Left ventricle myocardium inferior (tissue), 1 donor: ENCODE measurements at regions of chr9 and their contacts with region 1.

Region 1: DNA sequence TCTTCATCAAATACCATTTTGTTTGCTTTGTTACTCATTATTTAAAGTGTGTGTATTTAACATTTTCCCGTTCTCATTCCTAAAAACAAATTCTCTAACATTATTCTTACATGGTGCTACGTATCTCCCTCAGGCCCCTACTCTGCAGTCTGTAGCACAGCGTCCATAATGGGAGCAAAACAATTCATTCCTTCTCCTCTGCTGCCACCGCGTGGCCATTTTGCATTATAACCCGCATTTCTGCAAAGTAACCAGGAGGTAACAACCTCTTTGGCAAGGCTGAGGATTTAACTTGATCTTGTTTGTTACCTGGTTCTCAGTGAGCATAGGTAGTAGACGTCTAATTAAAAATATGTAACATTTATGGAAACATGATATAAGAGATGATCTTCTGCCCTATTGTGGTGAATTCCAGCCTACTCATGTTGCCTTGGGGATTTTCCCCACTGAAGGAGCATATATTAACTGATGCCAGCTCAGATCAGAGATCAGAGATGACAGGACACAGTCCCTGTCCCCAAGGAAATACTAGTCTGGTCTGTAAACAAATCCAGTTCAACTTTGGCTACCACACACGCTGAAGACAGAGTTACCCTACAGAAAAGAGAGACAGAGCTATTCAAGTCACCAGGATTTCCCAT is 10.5 kb downstream of the OR1K1 start:
- DNase-seq: peak; percentile 64
- H3K4me3 ChIP-seq: no peak overlapping the region
- H3K27ac ChIP-seq: no peak overlapping the region
- H3K4me1 ChIP-seq: peaks cover 3% of the 10 kb centered on the region
- H3K27me3 ChIP-seq: no peaks in the 10 kb centered on the region
- CTCF ChIP-seq: peak; percentile 79

Region 2: DNA sequence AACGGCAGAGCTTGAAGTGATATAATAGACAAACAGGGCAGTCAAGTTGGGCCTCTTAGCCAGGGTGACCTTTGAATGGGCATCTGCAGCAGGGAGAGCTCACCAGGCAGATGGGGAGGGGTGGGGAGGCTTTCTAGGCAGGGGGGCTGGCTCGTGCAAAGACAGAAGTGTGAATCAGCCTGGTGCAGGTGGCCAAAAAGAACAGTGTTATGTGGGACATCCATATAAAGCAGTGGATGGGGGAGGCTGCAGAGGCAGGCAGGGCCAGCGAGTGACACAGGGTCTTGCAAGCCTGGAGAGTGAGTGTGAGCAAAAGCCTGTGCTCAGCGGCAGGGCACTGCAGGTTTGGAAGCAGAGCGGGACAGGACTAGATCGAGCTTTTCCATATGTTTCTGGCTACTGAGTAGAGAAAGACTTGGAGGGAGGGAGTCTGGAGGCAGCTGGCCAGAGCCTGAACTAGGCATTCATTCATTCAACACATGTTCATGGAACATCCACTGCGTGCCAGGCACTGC is 703.1 kb before region 1 on chr9:
- intact Hi-C with region 1: loop called (anchors 10 kb)
- DNase-seq: no peak
- H3K4me3 ChIP-seq: no peak overlapping the region
- H3K27ac ChIP-seq: peak overlapping the region; percentile 27
- H3K4me1 ChIP-seq: peaks cover 15% of the 10 kb centered on the region
- H3K27me3 ChIP-seq: no peaks in the 10 kb centered on the region
- CTCF ChIP-seq: no peak

Region 3: GRCh38 chr9:122464633-122465567 is 345.5 kb before region 1 on chr9:
- intact Hi-C with region 1: loop called (anchors 2 kb)
- DNase-seq: peak; percentile 35
- H3K4me3 ChIP-seq: peak overlapping the region; percentile 57
- H3K27ac ChIP-seq: no peak overlapping the region
- H3K4me1 ChIP-seq: peaks cover 15% of the 10 kb centered on the region
- H3K27me3 ChIP-seq: peaks cover 45% of the 10 kb centered on the region
- CTCF ChIP-seq: peak; percentile 82